Activated CD4-positive, alpha-beta T cell treated with anti-CD3 and anti-CD28 coated beads for 36 hours (primary cell): ENCODE measurements at regions of chr2 and their contacts with region 1.

Region 1: GRCh38 chr2:174603280-174603679 is 5.7 kb upstream of the WIPF1 start:
- DNase-seq: peak; percentile 78
- ATAC-seq: peak; percentile 63
- H3K4me3 Mint-ChIP-seq: no peak overlapping the region
- H3K27ac Mint-ChIP-seq: peak overlapping the region; percentile 84
- H3K4me1 Mint-ChIP-seq: peaks cover 91% of the 10 kb centered on the region
- H3K27me3 Mint-ChIP-seq: no peaks in the 10 kb centered on the region

Region 2: GRCh38 chr2:173249661-173250641 is 1353.3 kb before region 1 on chr2:
- CTCF ChIA-PET with region 1: no interaction called
- POLR2A ChIA-PET with region 1: no interaction called
- intact Hi-C with region 1: no loop called
- DNase-seq: no peak
- ATAC-seq: no peak
- H3K4me3 Mint-ChIP-seq: no peak overlapping the region
- H3K27ac Mint-ChIP-seq: no peak overlapping the region
- H3K4me1 Mint-ChIP-seq: peaks cover 5% of the 10 kb centered on the region
- H3K27me3 Mint-ChIP-seq: peaks cover 5% of the 10 kb centered on the region

Region 3: DNA sequence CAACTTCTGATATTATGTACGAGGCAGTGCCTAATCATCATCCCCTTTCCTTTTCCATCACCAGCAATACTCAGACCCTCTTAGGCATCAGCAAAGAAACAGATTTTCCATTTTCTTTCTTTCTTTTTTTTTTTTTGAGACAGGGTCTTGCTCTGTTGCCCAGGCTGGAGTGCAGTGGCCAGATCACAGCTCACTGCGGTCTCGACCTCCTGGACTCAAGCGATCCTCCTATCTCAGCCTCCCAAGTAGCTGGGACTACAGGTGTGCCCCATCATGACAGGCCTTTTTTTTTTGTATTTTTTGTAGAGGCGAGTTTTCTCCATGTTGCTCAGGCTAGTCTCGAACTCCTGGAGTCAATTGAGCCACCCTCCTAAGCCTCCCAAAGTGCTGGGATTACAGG is 349.0 kb before region 1 on chr2:
- CTCF ChIA-PET with region 1: no interaction called
- POLR2A ChIA-PET with region 1: no interaction called
- intact Hi-C with region 1: no loop called
- DNase-seq: no peak
- ATAC-seq: no peak
- H3K4me3 Mint-ChIP-seq: no peak overlapping the region
- H3K27ac Mint-ChIP-seq: no peak overlapping the region
- H3K4me1 Mint-ChIP-seq: peaks cover 4% of the 10 kb centered on the region
- H3K27me3 Mint-ChIP-seq: no peaks in the 10 kb centered on the region

Region 4: GRCh38 chr2:174535821-174536220 is 67.5 kb before region 1 on chr2:
- CTCF ChIA-PET with region 1: no interaction called
- POLR2A ChIA-PET with region 1: no interaction called
- intact Hi-C with region 1: no loop called
- DNase-seq: no peak
- ATAC-seq: no peak
- H3K4me3 Mint-ChIP-seq: no peak overlapping the region
- H3K27ac Mint-ChIP-seq: no peak overlapping the region
- H3K4me1 Mint-ChIP-seq: no peaks in the 10 kb centered on the region
- H3K27me3 Mint-ChIP-seq: peaks cover 2% of the 10 kb centered on the region

Region 5: DNA sequence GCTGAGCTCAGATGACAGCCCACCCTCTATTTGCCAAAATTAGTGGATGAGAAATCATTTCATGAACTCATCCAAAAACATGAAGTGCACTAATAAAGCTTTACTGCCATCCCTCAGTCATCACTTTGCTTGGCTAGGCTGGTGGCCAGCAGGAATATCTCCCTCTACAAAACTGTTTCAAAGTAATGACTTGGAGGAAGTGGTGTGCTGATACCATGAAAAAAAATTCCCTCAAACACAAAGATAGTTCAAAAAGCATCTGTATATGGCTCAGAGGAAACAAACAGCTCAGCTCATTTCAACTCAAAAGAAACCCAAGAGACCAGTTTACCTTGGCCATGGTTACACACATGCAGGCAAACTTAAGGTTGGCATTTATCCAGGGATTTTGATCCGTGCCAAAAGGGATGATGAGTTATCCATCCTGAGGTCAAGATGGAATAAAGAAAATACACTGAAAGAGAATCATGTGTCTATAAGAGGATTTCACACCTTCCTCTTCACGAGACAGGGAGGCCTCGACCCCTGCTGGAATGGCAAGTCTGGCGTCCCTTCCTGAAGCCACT is 12.7 kb after region 1 on chr2:
- CTCF ChIA-PET with region 1: interaction called, 13 read pairs
- POLR2A ChIA-PET with region 1: interaction called, 5 read pairs
- intact Hi-C with region 1: loop called in 1 of 2 experiments (anchors 1 kb)
- DNase-seq: no peak
- ATAC-seq: peak; percentile 67
- H3K4me3 Mint-ChIP-seq: peak overlapping the region; percentile 17
- H3K27ac Mint-ChIP-seq: peak overlapping the region; percentile 88
- H3K4me1 Mint-ChIP-seq: peaks cover 88% of the 10 kb centered on the region
- H3K27me3 Mint-ChIP-seq: no peaks in the 10 kb centered on the region

Region 6: DNA sequence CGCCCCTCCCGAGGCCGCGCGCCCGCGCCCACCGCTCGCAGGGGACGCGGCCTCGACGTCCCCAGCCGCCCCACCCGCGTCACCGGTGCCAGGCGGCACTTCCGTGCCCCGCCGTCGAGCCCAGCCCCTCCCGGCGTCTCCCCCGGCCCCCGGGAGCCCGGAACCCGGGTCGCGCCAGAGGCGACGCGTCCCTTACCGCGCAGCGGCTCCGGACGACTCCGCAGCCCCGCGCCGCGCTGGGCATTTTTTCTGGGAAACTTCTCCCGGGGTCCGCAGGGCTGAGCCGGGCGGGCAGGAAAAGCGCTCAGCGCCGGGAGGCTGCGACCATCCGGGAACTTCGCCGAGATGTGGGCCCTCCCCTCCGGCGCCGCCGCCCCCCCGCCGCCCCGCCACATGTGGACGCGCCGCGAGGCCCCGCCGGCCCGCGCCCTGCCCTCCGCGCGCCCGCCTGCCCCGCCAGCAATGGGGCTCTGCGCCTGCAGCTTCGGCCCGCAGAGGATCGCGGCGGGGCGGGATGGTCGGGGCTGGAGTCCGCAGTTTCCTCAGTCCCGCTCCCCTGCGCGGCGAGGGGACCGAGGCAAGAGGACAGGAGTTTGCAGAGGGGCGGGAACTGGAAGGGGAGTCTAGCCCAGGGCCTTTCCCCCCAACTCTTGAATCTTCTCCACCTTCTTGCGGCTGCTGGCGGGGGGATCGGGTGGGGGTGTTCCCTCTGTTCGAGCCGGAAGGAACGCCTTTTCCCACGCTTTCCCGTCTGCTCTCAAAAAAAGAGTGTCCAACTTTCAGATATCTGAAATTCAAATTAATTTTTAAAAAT is 79.5 kb after region 1 on chr2:
- CTCF ChIA-PET with region 1: interaction called, 38 read pairs
- POLR2A ChIA-PET with region 1: no interaction called
- intact Hi-C with region 1: loop called (anchors 1 to 2 kb)
- DNase-seq: peak; percentile 66
- ATAC-seq: peak; percentile 66
- H3K4me3 Mint-ChIP-seq: peak overlapping the region; percentile 82
- H3K27ac Mint-ChIP-seq: peak overlapping the region; percentile 90
- H3K4me1 Mint-ChIP-seq: peaks cover 48% of the 10 kb centered on the region
- H3K27me3 Mint-ChIP-seq: no peaks in the 10 kb centered on the region

Region 7: DNA sequence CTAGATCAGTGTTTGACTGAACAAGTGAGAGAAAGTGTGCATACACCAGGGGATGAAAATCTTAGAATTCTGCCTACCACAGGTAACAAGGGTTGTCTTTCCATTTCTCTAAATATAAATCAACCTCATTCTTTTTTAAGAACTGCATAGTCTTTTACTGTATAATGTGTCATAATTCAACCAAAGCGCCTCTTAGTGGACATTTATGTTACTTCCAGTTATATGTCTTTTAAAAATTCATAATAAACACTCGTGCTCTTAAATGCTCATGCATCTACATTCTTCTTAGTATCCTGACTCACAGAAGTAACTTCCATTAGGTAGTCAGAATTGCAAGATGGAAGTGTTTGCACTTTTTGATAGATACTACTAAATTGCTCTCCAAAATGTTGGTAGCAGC is 84.8 kb after region 1 on chr2:
- CTCF ChIA-PET with region 1: interaction called, 38 read pairs
- POLR2A ChIA-PET with region 1: interaction called, 3 read pairs
- intact Hi-C with region 1: loop called (anchors 1 kb)
- DNase-seq: no peak
- ATAC-seq: peak; percentile 70
- H3K4me3 Mint-ChIP-seq: no peak overlapping the region
- H3K27ac Mint-ChIP-seq: no peak overlapping the region
- H3K4me1 Mint-ChIP-seq: peaks cover 19% of the 10 kb centered on the region
- H3K27me3 Mint-ChIP-seq: no peaks in the 10 kb centered on the region